ENCODE measurements at regions of chr4 and their contacts with region 1.

Region 1: GRCh38 chr4:41692717-41693345 is 55.7 kb downstream of the PHOX2B start:
- DNase-seq: no peak
- H3K4me3 ChIP-seq: no peak overlapping the region
- H3K27me3 ChIP-seq: no peaks in the 10 kb centered on the region
- CTCF ChIP-seq: peak; percentile 91

Region 2: DNA sequence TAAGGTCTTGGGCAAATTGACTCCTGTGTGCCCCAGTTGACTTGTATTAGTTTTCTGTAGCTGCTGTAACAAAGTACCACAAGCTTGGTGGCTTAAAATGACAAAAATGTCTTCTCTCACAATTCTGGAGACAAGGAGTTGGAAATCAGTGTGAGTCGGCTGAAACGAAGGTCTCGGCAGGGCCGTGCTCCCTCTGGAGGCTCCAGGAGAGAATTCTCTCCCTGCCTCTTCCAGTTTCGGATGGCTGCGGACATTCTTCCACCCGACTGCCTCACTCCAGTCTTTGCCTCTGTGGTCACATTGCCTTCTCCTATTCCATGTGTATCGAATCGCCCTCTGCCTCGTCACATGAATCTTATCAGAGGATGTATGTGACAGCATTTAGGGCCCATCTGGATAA is 121.7 kb after region 1 on chr4:
- CTCF ChIA-PET with region 1: interaction called, 31 read pairs
- POLR2A ChIA-PET with region 1: no interaction called
- DNase-seq: no peak
- H3K4me3 ChIP-seq: no peak overlapping the region
- H3K27me3 ChIP-seq: peaks cover 4% of the 10 kb centered on the region
- CTCF ChIP-seq: peak; percentile 71

Region 3: GRCh38 chr4:41882625-41883347 is 190.0 kb after region 1 on chr4:
- CTCF ChIA-PET with region 1: interaction called, 33 read pairs
- POLR2A ChIA-PET with region 1: no interaction called
- DNase-seq: no peak
- H3K4me3 ChIP-seq: no peak overlapping the region
- H3K27me3 ChIP-seq: peaks cover 43% of the 10 kb centered on the region
- CTCF ChIP-seq: peak; percentile 93

Region 4: DNA sequence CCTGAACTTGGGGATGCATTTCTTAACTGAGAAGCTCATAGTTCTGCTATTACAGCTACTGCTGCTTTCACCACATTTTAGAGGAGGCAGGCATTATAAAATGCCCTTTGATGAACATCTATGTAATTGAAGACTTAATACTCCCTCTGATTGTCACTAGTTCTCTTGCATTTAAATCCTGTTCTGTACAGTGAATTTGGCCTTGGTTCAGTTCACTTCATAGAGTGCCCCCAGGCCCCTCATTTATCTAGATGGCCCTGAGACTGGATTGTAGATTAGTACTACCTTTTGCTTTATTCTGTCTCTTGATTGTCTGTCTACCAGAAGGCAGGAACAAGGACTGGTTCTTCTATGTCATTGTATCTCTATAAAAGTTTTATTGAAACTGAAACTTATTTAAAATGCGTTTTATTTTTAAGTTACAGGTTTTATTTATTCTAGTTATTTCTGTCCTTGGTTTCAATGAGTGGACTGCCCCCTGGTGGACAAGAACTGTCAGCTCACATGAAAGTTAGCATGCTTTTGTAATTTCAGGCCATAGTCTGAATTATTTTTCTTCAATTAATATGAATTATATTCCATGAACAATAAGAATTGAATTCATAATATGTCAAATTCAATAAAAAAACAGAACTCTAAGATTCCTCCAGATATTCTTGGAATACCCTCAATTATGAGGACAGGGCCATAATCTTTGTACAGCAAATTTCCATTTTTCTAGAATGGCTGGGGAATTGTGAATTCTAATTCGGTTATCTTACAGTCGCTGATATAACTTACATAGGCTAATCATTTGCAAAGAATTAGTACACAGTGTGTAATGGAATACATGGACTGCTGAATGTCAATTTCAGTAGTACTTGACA is 195.2 kb after region 1 on chr4:
- CTCF ChIA-PET with region 1: interaction called, 33 read pairs
- POLR2A ChIA-PET with region 1: no interaction called
- DNase-seq: peak; percentile 1
- H3K4me3 ChIP-seq: no peak overlapping the region
- H3K27me3 ChIP-seq: peaks cover 24% of the 10 kb centered on the region
- CTCF ChIP-seq: peak; percentile 83